ENCODE measurements at regions of chrX and their contacts with region 1.

Region 1: GRCh38 chrX:37779857-37780256 is at the start of gene CYBB:
- H3K4me3 ChIP-seq: no peak within 1 kb of the TSS
- H3K27ac ChIP-seq: no peak within 1 kb of the TSS
- H3K4me1 ChIP-seq: no peaks in the 10 kb centered on the region
- CTCF ChIP-seq: no peak

Region 2: DNA sequence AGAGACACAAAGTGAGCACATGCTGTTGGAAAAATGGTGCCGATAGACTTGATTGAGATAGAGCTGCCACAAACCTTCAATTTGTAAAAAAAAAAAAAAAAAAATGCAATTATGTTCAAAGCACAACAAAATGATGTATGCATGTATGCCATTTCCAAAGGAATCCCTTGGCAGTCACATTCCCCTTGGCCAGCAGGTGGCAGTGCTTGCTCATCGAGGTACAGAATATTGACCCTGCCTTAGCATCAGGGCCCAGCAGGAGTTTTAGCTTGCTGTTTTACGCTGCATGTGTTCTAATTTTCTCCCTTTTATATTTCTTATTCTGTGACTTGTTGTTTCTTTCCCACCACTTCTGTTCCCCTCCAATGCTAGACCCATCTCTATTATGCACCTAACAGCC is 34.5 kb before region 1 on chrX:
- CTCF ChIA-PET with region 1: interaction called, 17 read pairs
- POLR2A ChIA-PET with region 1: no interaction called
- H3K4me3 ChIP-seq: no peak overlapping the region
- H3K27ac ChIP-seq: no peak overlapping the region
- H3K4me1 ChIP-seq: no peaks in the 10 kb centered on the region
- CTCF ChIP-seq: peak; percentile 59

Region 3: DNA sequence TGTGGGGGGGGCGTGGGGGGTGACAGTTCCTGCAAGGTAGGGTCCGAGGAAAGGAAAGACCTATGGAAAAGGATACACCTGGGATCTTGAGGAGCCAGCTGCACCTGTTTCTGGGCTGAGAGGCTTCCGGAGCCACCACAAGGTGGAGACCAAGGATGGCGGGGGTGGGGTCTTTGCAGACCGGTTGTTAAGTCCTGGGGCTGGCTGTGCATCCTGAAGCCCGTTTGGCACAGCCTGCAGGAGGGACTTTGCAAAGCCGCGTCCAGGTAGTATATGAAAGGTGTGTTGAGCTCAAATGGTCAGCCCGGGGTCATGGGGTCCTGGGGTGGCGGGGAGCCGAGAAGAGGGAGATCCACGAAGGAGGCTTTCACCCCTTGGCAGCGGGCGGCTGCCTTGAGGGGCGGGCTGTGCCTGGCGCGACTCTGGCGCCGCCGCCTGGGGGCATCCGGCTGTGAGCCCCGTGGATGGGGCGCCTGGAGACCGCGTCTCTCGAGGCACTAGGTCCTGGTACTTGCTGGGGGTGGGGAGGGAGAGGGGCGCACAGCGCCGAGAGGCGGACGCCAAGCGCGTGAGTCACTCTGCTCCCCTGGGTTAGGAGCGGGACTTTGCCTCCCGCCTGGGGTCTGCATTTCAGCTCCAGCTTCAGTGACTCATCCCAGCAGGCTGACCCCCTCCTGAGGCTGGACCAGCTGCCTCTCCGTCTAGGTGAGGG is 125.7 kb after region 1 on chrX:
- CTCF ChIA-PET with region 1: no interaction called
- POLR2A ChIA-PET with region 1: no interaction called
- H3K4me3 ChIP-seq: peak overlapping the region; percentile 52
- H3K27ac ChIP-seq: peak overlapping the region; percentile 47; the same call in 1 of the 2 replicates
- H3K4me1 ChIP-seq: 0 out of 2 replicates have a peak, but pooled peaks cover 6% of the 10 kb centered on the region
- CTCF ChIP-seq: peak; percentile 83

Measured in HEK293 (cell line).